ENCODE measurements at regions of chr9 and their contacts with region 1.

Region 1: GRCh38 chr9:129884220-129885017 is 49.2 kb downstream of the USP20 start:
- DNase-seq: peak in 1 of 2 donors; percentile 88
- H3K4me3 ChIP-seq: peak overlapping the region; percentile 41 to 46
- H3K27ac ChIP-seq: peak overlapping the region; percentile 85
- H3K4me1 ChIP-seq: peaks cover 31% of the 10 kb centered on the region
- H3K27me3 ChIP-seq: no peaks in the 10 kb centered on the region
- CTCF ChIP-seq: no peak
- POLR2A ChIP-seq: peak in 1 of 2 donors; percentile 31

Region 2: GRCh38 chr9:129823935-129824601 is 60.4 kb before region 1 on chr9 and contains the start of gene TOR1A:
- intact Hi-C with region 1: no loop called
- DNase-seq: peak in 1 of 2 donors; percentile 94
- H3K4me3 ChIP-seq: peak within 1 kb of the TSS; percentile 71 to 86
- H3K27ac ChIP-seq: peak within 1 kb of the TSS; percentile 63
- H3K4me1 ChIP-seq: peaks cover 12% of the 10 kb centered on the region
- H3K27me3 ChIP-seq: no peaks in the 10 kb centered on the region
- CTCF ChIP-seq: no peak
- POLR2A ChIP-seq: no peak
- total RNA-seq, gene TOR1A: 30.0 TPM

Region 3: GRCh38 chr9:129868916-129869486 is 15.4 kb before region 1 on chr9:
- intact Hi-C with region 1: no loop called
- DNase-seq: no peak
- H3K4me3 ChIP-seq: no peak overlapping the region
- H3K27ac ChIP-seq: no peak overlapping the region
- H3K4me1 ChIP-seq: no peaks in the 10 kb centered on the region
- H3K27me3 ChIP-seq: no peaks in the 10 kb centered on the region
- CTCF ChIP-seq: no peak
- POLR2A ChIP-seq: no peak

Region 4: GRCh38 chr9:130042833-130043653 is 158.6 kb after region 1 on chr9 and contains the start of gene FNBP1:
- intact Hi-C with region 1: loop called (anchors 1 kb)
- DNase-seq: no peak
- H3K4me3 ChIP-seq: peak within 1 kb of the TSS; percentile 89 to 92
- H3K27ac ChIP-seq: peak within 1 kb of the TSS; percentile 97
- H3K4me1 ChIP-seq: peaks cover 44% of the 10 kb centered on the region
- H3K27me3 ChIP-seq: no peaks in the 10 kb centered on the region
- CTCF ChIP-seq: no peak
- POLR2A ChIP-seq: peak in 1 of 2 donors; percentile 90
- total RNA-seq, gene FNBP1: 47.1 TPM

Region 5: GRCh38 chr9:130107234-130107861 is 222.9 kb after region 1 on chr9:
- intact Hi-C with region 1: loop called (anchors 10 kb)
- DNase-seq: peak in 1 of 2 donors; percentile 95
- H3K4me3 ChIP-seq: no peak overlapping the region
- H3K27ac ChIP-seq: peak overlapping the region; percentile 44
- H3K4me1 ChIP-seq: peaks cover 8% of the 10 kb centered on the region
- H3K27me3 ChIP-seq: no peaks in the 10 kb centered on the region
- CTCF ChIP-seq: peak; percentile 67 to 88 (median 81)
- POLR2A ChIP-seq: no peak

Measured in vagina (tissue), 2 donors.